ENCODE measurements at regions of chr17 and their contacts with region 1.

Region 1: DNA sequence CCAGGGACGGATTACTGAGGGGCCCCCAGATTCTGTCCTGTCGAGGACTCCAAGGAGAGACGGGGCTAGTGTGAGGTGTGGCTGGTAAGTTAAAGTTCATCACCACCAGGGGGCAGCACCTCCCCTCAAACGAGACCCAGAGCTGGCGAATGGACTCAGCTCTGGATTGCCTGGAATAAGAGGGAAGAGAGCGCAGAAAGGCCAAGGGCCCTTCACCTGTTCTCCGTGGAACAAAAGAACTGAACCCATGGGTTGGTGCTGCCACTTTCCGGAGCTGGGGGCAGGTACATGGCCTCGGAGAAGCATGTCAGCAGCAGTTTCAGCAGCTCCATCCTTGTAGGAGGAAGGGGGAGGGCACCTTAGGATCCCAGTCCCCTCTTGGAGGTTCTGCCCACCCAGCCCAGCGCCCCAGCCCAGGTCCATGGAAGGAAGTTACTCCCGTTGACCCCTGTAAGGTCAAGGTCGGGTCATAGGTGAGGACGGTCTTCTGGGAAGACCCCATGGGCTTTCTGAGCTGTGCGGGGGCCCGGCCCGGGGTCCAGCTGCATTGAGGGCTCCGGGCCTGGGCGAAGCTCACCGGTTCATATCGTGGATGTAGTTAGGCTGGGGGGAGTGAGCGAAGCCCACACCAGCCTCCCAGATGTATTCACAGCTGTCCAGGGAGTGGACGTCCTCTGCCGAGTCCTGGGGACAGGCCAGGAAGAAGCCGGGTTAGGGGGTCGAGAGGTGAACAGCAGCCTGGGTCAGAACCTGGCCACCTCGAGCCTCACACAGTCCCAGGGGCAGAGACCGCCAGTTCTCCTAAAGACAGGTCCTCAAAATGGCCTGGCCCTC is 10.7 kb downstream of the HID1 start:
- DNase-seq: peak; percentile 63 to 85
- H3K4me3 ChIP-seq: no peak overlapping the region
- H3K27ac ChIP-seq: no peak overlapping the region
- H3K4me1 ChIP-seq: no peaks in the 10 kb centered on the region
- H3K27me3 ChIP-seq: no peaks in the 10 kb centered on the region
- CTCF ChIP-seq: peak; percentile 91

Region 2: GRCh38 chr17:74659898-74660297 is 302.0 kb before region 1 on chr17:
- CTCF ChIA-PET with region 1: interaction called, 12 read pairs
- POLR2A ChIA-PET with region 1: no interaction called
- intact Hi-C with region 1: no loop called
- DNase-seq: no peak
- H3K4me3 ChIP-seq: no peak overlapping the region
- H3K27ac ChIP-seq: no peak overlapping the region
- H3K4me1 ChIP-seq: no peaks in the 10 kb centered on the region
- H3K27me3 ChIP-seq: peaks cover 84% of the 10 kb centered on the region
- CTCF ChIP-seq: no peak

Region 3: GRCh38 chr17:74873038-74873873 is 88.6 kb before region 1 on chr17:
- CTCF ChIA-PET with region 1: interaction called, 14 read pairs
- POLR2A ChIA-PET with region 1: interaction called, 8 read pairs
- intact Hi-C with region 1: loop called (anchors 5 kb)
- DNase-seq: peak; percentile 97 to 99
- H3K4me3 ChIP-seq: peak overlapping the region; percentile 85
- H3K27ac ChIP-seq: peak overlapping the region; percentile 64
- H3K4me1 ChIP-seq: peaks cover 23% of the 10 kb centered on the region
- H3K27me3 ChIP-seq: no peaks in the 10 kb centered on the region
- CTCF ChIP-seq: no peak

Region 4: DNA sequence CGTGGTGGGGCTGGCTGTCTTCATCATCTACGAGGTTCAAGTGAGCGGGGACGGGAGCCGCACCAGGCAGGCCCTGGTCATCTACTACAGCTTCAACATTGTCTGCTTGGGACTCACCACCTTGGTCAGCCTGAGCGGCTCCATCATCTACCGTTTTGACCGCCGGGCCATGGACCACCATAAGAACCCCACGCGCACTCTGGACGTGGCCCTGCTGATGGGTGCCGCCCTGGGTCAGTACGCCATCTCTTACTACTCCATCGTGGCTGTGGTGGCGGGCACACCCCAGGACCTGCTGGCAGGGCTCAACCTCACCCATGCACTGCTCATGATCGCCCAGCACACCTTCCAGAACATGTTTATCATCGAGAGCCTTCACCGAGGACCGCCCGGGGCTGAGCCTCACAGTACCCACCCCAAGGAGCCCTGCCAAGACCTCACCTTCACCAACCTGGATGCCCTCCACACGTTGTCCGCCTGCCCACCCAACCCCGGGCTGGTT is 31.3 kb before region 1 on chr17:
- CTCF ChIA-PET with region 1: no interaction called
- POLR2A ChIA-PET with region 1: no interaction called
- intact Hi-C with region 1: no loop called
- DNase-seq: no peak
- H3K4me3 ChIP-seq: no peak overlapping the region
- H3K27ac ChIP-seq: no peak overlapping the region
- H3K4me1 ChIP-seq: no peaks in the 10 kb centered on the region
- H3K27me3 ChIP-seq: peaks cover 24% of the 10 kb centered on the region
- CTCF ChIP-seq: no peak

Region 5: DNA sequence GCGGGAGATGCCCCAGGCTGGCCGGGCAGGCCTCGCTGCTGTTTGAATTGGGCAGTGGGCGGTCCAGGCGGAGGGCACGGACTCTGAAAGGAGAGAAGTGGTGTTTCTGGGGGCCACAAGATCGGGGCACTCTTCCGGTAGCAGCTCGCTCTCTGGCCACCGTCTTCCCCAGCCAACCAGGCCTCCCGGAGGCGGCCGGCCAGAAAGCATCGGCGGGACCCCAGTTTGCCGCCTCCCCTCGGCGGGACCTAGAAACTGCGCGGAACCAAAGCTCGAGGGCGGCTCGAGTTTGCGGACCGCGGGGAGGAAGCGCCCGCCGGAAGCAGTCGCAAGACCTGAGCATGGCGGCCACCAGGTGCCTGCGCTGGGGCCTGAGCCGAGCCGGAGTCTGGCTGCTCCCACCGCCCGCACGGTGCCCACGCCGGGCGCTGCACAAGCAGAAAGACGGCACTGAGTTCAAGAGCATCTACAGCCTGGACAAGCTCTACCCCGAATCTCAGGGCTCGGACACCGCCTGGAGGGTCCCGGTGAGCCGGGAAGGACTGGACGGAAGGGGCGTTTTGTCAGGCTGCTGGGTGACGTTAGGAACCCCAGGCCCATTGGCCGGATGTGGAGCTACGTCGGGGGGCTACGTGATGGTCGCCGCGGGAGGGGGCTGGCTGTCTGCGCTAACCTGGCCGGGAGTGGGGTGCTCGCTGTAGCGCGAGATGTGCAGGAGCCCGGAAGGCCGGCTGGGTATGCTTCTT is 50.6 kb after region 1 on chr17 and contains the start of gene MRPL58:
- CTCF ChIA-PET with region 1: interaction called, 9 read pairs
- POLR2A ChIA-PET with region 1: no interaction called
- intact Hi-C with region 1: loop called (anchors 2 kb)
- DNase-seq: peak; percentile 74 to 83
- H3K4me3 ChIP-seq: peak within 1 kb of the TSS; percentile 90
- H3K27ac ChIP-seq: peak within 1 kb of the TSS; percentile 43
- H3K4me1 ChIP-seq: peaks cover 31% of the 10 kb centered on the region
- H3K27me3 ChIP-seq: no peaks in the 10 kb centered on the region
- CTCF ChIP-seq: peak; percentile 70
- total RNA-seq, gene MRPL58: 42.8 and 48.4 TPM in 2 replicates

Region 6: DNA sequence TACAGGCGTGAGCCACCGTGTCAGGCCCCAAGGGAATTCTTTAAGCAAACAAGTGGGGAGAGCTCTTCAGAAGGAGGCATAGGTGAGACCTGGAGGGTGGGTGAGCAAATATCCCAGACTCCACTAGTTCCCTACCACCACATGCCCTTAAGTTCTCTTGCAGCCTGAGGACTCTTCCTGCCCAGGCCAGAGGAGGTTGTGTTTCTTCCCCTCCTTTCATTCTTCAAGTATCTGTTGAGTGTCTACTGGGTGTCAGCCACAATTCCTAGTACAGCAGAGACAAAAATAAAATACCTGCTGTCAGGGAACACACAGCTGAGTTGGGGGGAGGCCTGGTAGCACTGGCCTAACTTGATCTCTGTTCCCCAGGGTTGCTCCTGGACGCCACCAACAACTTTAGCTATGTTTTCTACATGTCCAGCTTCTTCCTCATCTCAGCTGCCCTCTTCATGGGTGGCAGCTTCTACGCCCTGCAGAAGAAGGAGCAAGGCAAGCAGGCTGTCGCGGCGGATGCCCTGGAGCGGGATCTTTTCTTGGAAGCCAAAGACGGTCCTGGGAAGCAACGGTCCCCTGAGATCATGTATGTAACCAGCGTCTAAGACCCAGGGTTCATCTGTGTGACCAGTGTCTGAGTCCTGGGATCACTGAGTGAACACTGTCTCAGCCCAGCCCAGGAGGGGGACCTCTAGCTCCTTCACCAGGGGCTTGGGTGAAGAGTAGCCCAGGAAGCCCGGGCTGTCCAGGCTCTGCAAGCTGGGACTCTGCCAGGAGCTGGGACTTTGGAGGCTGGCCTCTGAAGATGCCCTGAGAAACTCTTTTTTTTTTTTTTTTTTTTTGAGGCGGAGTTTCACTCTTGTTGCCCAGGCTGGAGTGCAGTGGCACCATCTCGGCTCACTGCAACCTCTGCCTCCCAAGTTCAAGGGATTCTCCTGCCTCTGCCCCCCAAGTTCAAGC is 142.0 kb after region 1 on chr17:
- CTCF ChIA-PET with region 1: interaction called, 17 read pairs
- POLR2A ChIA-PET with region 1: no interaction called
- intact Hi-C with region 1: no loop called
- DNase-seq: no peak
- H3K4me3 ChIP-seq: no peak overlapping the region
- H3K27ac ChIP-seq: 0 out of 2 replicates have a peak overlapping the region, but pooled peaks have one; percentile 6
- H3K4me1 ChIP-seq: 0 out of 2 replicates have a peak, but pooled peaks cover 6% of the 10 kb centered on the region
- H3K27me3 ChIP-seq: no peaks in the 10 kb centered on the region
- CTCF ChIP-seq: no peak

Measured in PC-9 (cell line).